Posterior cingulate gyrus (tissue), 11 donors: ENCODE measurements at regions of chr15 and their contacts with region 1.

Region 1: DNA sequence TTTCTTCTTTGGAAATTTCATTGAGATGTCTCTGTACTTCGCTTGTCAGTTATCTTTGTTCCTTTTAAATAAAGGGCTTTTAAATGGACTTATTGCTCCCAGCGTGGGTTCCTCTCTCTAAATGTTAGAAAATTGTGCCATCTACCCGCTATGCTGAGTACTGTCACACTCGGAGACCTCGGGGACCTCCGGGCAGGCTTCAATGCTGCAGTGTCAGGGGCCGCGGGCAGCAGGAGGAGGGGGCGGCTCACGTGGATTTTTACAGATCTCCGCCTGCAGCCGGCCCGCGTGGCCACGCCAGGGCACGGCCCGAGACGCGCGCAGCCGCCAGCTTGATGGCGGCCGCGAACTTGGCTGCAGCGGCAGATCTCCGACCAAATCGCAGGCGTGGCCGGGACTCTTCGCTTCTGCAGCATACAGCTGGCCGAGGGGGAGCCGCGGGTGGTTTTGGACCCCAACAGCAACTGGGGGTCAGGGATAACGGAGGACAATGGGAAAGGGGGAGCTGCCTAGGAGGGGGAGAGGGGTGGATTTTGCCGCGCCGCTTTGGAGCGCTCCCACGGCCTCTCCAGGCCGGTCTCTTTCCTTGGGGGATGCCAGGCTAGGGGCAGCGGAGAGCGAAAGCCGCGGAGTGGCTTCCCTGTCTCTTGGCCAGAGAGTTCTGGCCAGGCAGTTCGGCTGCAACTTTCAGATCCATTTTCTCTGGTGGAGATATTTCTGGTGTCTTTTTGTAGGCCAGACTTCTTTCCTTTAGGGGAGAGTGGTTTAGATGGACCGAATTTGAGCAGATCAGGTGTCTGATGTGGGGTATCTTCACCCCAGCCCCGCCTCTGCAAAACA is 15.3 kb downstream of the NR2F2 start:
- DNase-seq: peak in 5 of 10 donors; percentile 30 to 88 (median 40)

Region 2: DNA sequence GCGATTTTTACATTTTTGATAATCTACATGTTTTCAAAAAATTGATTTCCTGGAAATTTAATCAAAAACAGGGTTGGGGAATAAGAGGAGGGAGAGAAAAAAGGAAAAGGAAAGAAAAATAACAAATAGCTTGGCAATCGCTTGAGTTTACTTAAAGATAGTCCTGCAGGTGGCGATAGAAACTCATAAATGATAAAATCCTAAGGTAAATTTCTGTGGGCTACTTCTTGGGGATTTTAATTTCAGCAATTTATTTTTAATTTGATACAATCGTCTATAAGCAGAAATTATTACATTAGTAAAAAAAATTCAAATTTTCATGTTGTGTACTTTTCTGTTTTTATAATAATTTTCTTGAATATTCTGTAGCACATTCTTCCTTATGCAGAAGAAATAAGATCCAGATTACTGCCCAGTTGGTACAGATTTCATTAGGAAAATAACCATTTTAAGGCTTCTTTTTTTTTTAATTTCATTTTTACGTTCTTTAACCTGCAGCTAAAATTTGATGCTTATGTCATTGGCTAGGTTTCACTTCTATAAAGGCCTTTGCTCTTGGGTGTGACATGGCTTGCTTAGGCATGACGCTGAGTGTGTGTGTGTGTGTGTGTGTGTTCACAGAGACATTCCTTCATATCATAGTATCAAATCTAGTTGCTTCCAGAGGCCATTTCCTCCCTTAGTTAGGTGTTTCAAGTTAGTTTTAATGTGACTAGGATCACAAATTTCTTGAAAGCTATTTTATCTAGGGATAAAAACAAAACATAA is 1932.6 kb before region 1 on chr15:
- intact Hi-C with region 1: loop called (anchors 10 kb)
- DNase-seq: no peak

Region 3: DNA sequence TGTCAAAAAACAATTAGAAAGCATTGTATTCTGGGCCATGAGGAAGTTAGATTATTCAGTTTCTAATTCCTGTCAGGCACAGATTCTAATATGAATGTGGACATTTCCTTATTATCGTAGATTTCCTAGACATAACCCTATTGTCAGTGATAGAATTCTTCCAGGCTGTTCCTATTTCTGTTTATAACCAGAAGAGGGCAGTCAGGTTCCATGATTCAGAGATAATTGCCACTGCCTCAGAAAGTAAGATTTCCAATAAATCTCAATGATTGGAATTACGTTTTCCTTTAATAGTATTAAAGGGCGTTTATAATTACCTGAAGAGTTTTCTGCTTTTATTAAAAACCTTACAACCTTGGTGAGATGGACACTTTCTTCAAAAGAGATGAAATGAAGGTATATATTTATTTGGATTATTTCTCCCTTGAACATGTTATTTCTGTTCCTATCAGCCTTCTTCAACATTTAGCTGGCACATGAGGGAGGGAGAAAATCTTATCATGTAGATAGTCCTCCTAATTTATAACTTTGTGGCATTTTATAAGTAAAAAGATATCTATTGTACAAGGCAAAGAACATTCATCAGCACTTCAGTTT is 1675.2 kb before region 1 on chr15:
- intact Hi-C with region 1: loop called (anchors 2 kb)
- DNase-seq: no peak

Region 4: GRCh38 chr15:95259513-95259912 is 1086.3 kb before region 1 on chr15:
- intact Hi-C with region 1: loop called (anchors 1 kb)
- DNase-seq: peak in 9 of 10 donors; percentile 30 to 91 (median 64)

Region 5: DNA sequence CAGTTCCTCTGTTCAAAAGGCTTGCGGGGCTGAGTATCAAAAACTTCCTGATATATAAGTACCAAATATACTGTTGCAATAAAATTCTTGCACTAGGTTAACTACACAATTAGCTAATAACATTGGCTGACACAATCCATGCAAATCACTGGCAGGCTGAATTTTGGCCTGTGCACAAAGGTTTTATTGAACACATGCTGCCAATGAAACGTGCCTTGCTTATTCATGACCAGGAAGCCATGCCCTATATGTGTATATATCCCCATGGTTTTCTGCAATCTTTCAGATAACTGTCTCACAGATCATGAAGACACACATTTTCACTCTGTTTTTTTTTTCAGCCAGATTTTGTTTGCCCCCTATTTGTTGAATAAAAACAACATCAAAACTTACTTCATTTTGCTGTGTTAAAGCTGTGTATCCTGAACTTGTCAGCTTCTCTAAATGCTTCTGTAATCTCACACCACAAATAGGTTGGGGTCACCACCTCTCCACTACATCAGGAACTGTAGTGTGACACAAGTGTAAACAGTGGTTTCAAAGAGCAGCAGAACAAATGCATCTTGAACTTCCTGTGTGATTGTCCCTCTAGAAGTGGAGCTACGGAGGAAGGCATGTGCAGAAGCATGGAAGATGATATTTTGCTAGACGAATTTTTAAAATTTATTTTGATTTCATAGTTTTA is 936.0 kb before region 1 on chr15:
- intact Hi-C with region 1: loop called (anchors 10 kb)
- DNase-seq: no peak

Region 6: DNA sequence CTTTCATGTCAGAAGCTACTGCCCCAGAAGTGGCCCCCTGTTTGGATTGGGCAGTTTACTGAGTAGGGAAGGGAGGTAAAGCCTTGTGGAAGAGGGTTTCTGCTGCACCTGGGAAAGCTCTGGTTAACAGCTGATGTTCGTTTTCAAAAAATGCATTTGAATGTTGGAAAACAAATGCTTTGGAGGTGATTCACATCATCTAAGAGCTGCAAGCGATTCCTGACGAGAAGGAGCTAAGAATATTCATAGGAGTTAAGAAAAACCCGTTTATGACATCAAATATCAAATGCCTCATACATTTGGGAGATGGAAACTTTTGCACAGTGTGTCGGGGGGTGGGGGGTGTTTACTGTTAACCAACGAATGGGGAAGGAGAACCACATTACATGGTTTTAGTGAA is 199.1 kb before region 1 on chr15:
- intact Hi-C with region 1: no loop called
- DNase-seq: no peak